HAP-1 (cell line): ENCODE measurements at regions of chr1 and their contacts with region 1.

Region 1: GRCh38 chr1:1100296-1100695 is 15.6 kb downstream of the C1orf159 start:
- DNase-seq: peak in 1 of 2 experiments; percentile 1
- H3K4me3 ChIP-seq: no peak overlapping the region
- H3K4me1 ChIP-seq: no peaks in the 10 kb centered on the region
- H3K27me3 ChIP-seq: no peaks in the 10 kb centered on the region

Region 2: GRCh38 chr1:1050577-1051052 is 49.7 kb before region 1 on chr1:
- in situ Hi-C with region 1: loop called (anchors 5 kb)
- DNase-seq: no peak
- H3K4me3 ChIP-seq: no peak overlapping the region
- H3K4me1 ChIP-seq: no peaks in the 10 kb centered on the region
- H3K27me3 ChIP-seq: no peaks in the 10 kb centered on the region